ENCODE measurements at regions of chr4 and their contacts with region 1.

Region 1: DNA sequence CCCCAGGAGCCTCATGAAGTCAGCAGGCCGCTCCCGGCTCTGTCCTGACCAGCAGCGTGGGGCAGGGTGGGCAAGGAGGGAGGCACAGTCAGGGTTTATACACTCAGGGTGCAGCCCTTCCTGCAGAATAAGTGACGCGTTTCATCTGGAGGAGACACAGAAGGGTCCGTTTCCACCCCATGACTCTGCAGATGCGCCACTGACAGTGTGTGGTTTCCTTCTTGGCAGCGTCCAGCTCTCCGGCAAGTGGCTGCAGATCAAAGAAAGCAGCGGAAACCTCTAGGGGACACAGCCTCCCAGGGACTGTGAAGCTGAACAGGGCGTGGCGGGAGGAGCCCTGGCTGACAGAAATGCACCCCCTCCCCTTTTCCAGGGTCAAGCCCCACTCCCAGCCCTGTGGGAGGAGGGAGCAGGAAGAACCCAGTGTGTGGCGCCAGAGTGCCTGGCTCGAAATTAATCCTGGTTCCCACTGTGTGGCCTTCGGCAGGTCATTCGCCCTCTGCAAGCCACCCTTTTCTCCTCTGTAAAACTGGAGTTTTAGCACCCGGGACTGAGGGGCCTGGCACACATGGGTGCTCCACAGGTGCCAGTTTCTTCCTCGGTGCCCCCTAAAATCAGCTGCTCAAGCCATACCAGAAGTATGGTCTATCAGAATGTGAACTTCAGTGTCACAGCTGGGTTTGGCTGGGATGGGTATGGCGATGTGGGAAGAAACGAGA is 17.3 kb upstream of the TBC1D14 start:
- DNase-seq: peak; percentile 70
- H3K4me3 Mint-ChIP-seq: peak overlapping the region; percentile 17
- H3K27ac Mint-ChIP-seq: peak overlapping the region; percentile 86
- H3K4me1 Mint-ChIP-seq: peaks cover 39% of the 10 kb centered on the region
- H3K27me3 Mint-ChIP-seq: no peaks in the 10 kb centered on the region

Region 2: DNA sequence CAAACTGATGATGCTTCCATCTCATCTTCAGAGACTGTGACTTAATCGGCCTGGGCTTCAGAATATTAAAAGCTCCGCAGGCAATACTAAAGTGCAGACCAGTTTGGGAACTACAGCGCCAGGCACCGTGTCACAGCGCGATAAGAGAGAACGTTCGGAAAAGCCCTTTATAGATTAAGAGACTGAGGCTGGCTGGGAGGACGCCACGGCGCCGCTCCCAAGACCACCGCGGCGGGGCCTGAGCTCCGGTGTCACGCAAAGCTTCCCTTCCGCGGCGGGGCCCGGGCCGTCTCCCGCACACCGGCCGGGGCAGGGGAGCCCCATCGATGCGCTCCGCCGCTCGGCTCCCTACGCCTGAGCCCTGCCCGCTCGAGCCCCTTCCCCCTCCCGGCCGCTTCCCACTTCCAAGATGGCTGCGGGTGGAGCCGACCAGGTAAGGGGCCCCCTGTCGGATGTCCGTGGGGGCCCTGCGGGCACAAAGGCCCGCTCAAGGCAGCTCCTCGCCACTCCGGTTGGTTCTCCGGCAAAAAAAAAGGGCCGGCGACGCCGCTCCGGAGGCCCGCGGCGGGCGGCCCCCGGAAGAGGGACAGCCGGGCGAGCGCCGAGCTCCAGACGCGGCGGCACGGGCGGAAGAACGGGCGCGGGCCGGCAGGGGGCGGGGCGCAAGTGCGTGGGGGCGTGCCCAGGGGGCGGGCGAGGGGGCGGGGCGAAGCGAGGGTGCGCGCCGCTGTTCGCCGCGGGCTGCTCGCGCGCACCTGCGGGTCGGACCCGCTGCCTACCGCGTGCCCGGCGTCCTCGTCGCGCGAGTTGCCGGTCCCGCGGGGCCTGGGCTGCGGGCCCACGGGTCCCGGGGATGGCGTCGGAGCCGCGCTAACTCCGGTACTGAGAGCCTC is 17.0 kb after region 1 on chr4 and contains the start of gene TBC1D14:
- CTCF ChIA-PET with region 1: interaction called, 17 read pairs
- DNase-seq: peak; percentile 91
- H3K4me3 Mint-ChIP-seq: peak within 1 kb of the TSS; percentile 90
- H3K27ac Mint-ChIP-seq: peak within 1 kb of the TSS; percentile 89
- H3K4me1 Mint-ChIP-seq: peaks cover 63% of the 10 kb centered on the region
- H3K27me3 Mint-ChIP-seq: peaks cover 31% of the 10 kb centered on the region

Measured in activated naive CD4-positive, alpha-beta T cell treated with anti-CD3 and anti-CD28 coated beads, Interleukin-2, amount 10 ng/mL, durations not matched to agents 7 days and 5 days (primary cell).